ENCODE measurements at regions of chr1 and their contacts with region 1.

Region 1: DNA sequence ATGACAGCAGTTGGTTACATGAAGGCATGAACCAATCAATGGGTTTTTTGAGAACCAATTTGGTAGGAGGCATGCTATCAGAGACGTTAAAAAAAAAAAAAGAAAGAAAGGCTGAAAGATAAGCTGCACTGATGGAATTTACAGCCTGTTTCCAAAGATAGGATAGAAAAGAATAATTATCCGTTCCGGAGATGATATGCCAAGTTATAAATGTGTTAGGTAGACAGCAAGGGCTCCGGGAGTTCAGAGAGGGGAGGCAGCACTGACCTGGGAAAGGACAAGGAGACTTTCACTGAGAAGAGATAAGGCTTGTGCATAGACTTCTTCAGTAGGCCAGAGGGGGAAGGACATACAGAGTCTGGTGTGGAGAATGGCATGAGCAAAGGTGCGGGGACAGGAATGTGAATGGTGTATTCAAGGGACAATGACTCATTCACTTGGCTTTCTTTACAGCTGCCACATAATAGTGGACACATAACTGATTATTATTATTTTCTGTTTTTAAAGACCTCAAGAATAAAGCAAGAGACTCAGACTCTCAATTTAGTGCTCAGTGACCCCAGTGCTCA is 24.8 kb upstream of the ACBD6 start:
- DNase-seq: peak; percentile 87
- H3K4me3 ChIP-seq: no peak overlapping the region
- H3K27ac ChIP-seq: peak overlapping the region; percentile 15 to 42
- H3K4me1 ChIP-seq: peaks cover 26% of the 10 kb centered on the region
- H3K27me3 ChIP-seq: no peaks in the 10 kb centered on the region
- CTCF ChIP-seq: no peak
- POLR2A ChIP-seq: no peak

Region 2: DNA sequence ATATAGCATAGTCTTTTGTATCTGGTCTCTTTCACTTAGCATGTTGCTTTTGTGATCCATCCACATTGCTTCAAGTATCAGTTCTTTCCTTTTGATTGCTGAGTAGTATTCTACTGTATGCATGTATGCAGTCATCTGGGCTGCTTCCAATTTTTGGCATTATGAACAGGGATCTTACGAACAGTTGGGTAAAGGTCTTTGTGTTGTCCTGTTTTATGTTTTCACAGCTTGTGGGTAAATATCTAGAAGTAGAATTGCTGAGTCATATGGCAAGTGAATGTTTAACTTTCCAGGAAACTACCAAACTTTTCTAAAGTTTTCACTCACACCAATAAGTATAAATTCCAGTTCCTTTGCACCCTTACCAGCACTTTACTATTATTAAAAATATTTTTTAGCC is 236.2 kb before region 1 on chr1:
- intact Hi-C with region 1: no loop called
- DNase-seq: no peak
- H3K4me3 ChIP-seq: no peak overlapping the region
- H3K27ac ChIP-seq: no peak overlapping the region
- H3K4me1 ChIP-seq: peaks cover 5% of the 10 kb centered on the region
- H3K27me3 ChIP-seq: no peaks in the 10 kb centered on the region
- CTCF ChIP-seq: no peak
- POLR2A ChIP-seq: no peak

Region 3: GRCh38 chr1:180888870-180889269 is 361.7 kb after region 1 on chr1:
- intact Hi-C with region 1: no loop called
- DNase-seq: no peak
- H3K4me3 ChIP-seq: no peak overlapping the region
- H3K27ac ChIP-seq: no peak overlapping the region
- H3K4me1 ChIP-seq: no peaks in the 10 kb centered on the region
- H3K27me3 ChIP-seq: no peaks in the 10 kb centered on the region
- CTCF ChIP-seq: no peak
- POLR2A ChIP-seq: no peak

Region 4: DNA sequence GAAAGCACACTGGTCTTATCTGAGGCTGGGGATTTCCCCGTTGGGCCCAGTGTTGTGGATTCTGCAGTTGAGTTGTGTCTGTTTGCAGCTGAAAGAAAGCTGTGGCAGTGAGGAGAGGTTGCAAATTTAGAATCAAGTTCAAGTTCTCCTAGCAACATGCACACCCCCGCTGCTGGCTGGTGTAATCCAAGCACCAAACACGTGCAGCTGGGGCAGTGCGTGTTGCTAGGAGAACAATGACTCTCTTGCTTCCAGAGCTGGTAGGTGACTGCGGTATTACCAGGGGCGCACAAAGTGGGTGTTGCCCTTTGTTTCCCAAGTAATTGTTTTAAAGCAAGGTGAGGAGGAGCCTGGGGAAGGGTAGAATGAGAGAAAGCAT is 652.8 kb after region 1 on chr1:
- intact Hi-C with region 1: loop called (anchors 10 kb)
- DNase-seq: peak; percentile 87
- H3K4me3 ChIP-seq: no peak overlapping the region
- H3K27ac ChIP-seq: no peak overlapping the region
- H3K4me1 ChIP-seq: peaks cover 11% of the 10 kb centered on the region
- H3K27me3 ChIP-seq: no peaks in the 10 kb centered on the region
- CTCF ChIP-seq: no peak
- POLR2A ChIP-seq: no peak